ENCODE measurements at regions of chr7 and their contacts with region 1.

Region 1: DNA sequence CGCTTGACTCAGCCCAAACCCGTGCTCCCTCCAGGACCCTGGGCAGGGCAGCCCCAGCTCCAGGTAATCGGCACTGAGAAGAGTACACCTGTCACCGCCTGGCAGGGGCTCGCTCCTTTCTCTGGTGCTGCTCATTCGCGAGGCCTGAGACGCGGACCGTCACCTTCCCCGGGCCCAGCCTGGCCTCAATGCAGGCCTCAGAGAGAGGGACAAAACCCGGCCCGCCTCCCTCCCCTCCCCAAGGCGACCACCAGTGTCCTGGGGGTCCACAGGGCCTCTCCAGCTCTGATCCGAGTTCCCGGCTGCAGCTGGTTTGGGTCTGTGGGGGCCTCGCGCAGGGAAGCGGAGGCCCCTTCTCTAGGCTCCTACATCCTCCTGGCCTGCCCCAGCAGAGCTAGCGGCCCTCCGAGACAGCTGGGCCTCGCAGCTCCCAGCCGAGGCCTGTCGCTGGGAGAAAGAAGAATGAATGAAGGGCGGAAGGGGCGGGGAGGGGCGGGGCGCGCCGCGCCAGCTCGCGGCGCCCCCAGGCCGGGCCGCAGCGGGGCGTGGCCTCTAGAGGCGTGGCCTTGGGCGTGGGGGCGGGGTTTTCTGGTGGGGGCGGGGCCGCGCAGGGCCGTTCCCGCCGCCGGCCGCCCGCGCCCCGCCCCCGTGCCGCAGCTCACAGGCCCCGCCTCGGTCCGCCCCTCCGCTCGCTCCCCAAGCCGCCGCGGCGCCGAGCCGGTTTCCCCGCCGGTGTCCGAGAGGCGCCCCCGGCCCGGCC is at the start of gene LIMK1:
- DNase-seq: peak; percentile 78
- H3K4me3 Mint-ChIP-seq: peak within 1 kb of the TSS; percentile 88
- H3K27ac Mint-ChIP-seq: peak within 1 kb of the TSS; percentile 89
- H3K4me1 Mint-ChIP-seq: peaks cover 12% of the 10 kb centered on the region
- H3K27me3 Mint-ChIP-seq: peaks cover 2% of the 10 kb centered on the region
- total RNA-seq, gene LIMK1: 24.3 and 25.2 TPM in 2 replicates

Region 2: DNA sequence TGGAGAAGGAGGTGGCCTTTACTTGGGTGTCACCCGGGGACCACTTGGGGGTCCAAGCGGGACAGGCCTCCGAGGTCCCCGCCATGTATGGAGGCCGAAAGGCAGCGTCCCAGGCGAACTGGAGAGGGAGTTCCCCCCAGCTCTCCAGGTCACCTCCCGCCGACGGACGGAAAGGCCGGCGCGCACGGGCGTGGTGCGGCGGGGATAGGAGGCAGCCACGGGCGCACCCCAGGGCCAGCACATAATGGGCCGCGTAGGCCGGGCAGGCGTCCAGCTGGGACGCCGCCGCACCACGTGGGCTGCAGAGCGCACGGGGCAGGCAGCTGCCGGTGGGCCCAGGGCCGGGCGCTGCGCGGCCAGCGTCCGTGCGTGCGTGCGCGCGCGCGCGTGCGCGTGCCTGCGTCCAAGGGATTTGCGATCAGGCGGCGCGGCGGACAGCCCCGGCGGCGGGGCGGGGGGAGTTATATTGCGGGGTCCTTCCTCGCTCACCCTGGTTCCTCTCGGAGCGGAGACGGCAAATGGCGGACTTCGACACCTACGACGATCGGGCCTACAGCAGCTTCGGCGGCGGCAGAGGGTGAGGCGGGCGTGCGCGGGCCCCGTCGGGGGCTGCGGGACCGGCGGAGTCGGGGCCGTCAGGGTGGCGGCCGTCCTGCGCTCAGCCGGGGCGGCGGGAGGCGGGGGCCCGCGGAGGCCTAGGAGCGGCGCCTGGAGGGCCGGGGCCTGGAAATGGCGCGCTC is 90.7 kb after region 1 on chr7 and contains the start of gene EIF4H:
- intact Hi-C with region 1: loop called (anchors 1 kb)
- DNase-seq: peak; percentile 93
- H3K4me3 Mint-ChIP-seq: peak within 1 kb of the TSS; percentile 94
- H3K27ac Mint-ChIP-seq: peak within 1 kb of the TSS; percentile 90
- H3K4me1 Mint-ChIP-seq: peaks cover 45% of the 10 kb centered on the region
- H3K27me3 Mint-ChIP-seq: peaks cover 3% of the 10 kb centered on the region
- total RNA-seq, gene EIF4H: 343 and 355 TPM in 2 replicates

Region 3: DNA sequence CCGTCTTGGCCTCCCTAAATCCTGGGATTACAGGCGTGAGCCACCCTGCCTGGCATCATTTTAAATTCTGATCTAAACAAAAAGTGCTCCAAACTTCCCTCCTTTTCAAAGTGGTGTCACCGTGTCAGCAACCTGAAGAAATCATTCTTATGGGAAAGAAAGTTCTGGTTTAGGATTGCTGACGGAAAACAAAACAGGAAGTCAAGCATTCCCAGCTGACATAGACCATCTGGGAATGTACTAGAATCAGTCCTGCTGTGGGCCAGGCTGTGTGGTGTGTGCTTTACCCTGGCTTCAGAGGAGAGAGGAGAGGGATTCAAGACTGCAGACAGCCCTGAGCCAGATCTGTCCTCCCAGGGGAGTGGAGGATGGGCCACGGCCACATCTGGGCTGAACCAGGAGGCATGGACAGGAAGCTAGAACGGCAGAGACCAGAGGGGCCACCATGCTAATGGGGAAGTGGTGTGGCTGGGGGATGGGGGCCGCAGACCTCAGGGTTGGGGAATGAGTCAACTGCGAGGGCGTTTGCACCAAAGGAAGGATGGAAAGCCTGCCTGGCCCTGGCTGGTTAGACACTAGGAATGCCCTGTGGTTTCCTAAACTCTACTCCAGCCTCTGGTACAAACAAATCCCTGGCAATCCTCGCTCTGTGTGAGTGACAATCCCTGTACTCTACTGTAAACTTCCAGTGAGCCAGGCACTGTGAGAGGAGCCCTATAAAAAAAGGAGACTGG is 189.2 kb after region 1 on chr7:
- intact Hi-C with region 1: no loop called
- DNase-seq: no peak
- H3K4me3 Mint-ChIP-seq: no peak overlapping the region
- H3K27ac Mint-ChIP-seq: peak overlapping the region; percentile 63
- H3K4me1 Mint-ChIP-seq: peaks cover 12% of the 10 kb centered on the region
- H3K27me3 Mint-ChIP-seq: peaks cover 15% of the 10 kb centered on the region

Measured in activated T-helper 1 cell treated with anti-CD3 and anti-CD28 coated beads, Interleukin-12 subunit alpha, Interleukin-12 subunit beta, Interleukin-2, Interleukin-4 antibody, amounts not matched to agents 30 ng/mL and 10 ng/mL and 1 ng/mL, durations not matched to agents 14 hours and 24 hours and 36 hours (primary cell).